ENCODE measurements at regions of chr6 and their contacts with region 1.

Region 1: DNA sequence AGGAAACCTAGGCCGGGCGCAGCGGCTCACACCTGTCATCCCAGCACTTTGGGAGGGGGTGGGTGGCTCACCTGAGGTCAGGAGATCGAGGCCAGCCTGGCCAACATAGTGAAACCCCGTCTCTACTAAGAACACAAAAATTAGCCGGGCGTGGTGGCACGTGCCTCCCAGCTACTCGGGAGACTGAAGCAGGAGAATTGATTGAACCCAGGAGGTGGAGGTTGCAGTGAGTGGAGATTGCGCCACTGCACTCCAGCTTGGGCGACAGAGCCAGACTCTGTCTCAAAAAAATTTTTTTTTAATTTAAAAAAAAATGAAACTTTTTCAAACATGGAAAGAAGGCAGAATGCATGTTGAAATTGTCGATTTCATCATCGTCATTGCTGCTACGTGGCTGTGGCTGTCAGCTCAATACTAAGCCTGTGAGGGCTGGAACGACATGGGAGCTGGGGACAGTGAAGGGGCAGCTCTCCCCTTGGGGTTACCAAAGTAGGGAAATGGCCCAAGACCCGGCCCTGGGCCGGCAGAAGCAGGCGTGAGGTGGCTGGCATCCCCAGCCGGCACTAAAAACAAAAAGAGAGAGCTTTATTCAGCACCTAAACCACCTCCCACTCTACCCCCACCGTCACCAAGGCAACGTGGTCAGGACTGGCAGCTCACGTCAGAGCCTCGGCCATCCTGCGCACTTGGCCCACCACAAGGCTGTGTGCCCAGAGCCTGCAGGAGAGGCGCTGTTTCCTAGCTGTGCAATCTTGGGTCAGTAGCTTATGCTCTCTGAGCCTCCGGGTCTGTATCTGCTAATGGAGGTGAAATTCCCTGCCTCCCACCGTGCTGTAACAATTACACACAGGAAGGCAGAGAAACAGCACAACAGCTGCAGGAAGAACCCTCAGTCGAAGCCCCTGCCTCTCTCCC is 30.8 kb downstream of the AGPAT4 start:
- DNase-seq: peak; percentile 85 to 90
- ATAC-seq: peak; percentile 75 to 87 (median 79)
- H3K4me3 ChIP-seq: no peak overlapping the region
- H3K4me3 Mint-ChIP-seq: peak overlapping the region; percentile 84
- H3K27ac ChIP-seq: peak overlapping the region; percentile 77
- H3K27ac Mint-ChIP-seq: peak overlapping the region; percentile 92 to 95
- H3K4me1 ChIP-seq: peaks cover 30% of the 10 kb centered on the region
- H3K4me1 Mint-ChIP-seq: peaks cover 39 to 41% of the 10 kb centered on the region in 2 donors
- H3K27me3 ChIP-seq: no peaks in the 10 kb centered on the region
- H3K27me3 Mint-ChIP-seq: peaks cover 2 to 26% of the 10 kb centered on the region in 2 donors
- CTCF ChIP-seq: peak; percentile 16

Region 2: DNA sequence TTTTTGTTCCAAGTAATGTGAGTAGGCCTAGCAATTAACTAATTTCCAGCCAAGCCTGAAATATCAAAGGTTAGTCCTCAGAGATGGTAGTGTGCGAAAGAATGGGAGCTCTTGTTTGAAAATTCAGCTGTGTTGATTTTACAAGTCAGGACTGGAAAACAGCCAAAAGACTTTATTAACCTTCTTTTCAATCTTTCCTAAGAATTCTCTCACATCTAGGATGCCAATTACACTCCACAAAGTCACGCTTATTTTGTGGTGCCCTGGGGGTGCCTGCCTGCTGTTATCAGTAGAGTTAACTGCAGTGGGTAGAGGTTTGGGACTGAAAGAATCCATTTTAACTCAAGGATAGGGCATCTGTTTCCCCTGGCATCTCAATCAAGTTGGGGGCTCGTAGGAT is 282.2 kb before region 1 on chr6:
- intact Hi-C with region 1: no loop called
- DNase-seq: no peak
- ATAC-seq: no peak
- H3K4me3 ChIP-seq: no peak overlapping the region
- H3K4me3 Mint-ChIP-seq: no peak overlapping the region
- H3K27ac ChIP-seq: no peak overlapping the region
- H3K27ac Mint-ChIP-seq: no peak overlapping the region
- H3K4me1 ChIP-seq: no peaks in the 10 kb centered on the region
- H3K4me1 Mint-ChIP-seq: no peaks in the 10 kb centered on the region
- H3K27me3 ChIP-seq: no peaks in the 10 kb centered on the region
- H3K27me3 Mint-ChIP-seq: peaks cover 20 to 47% of the 10 kb centered on the region in 2 donors
- CTCF ChIP-seq: no peak

Region 3: GRCh38 chr6:160992061-160992979 is 250.7 kb before region 1 on chr6:
- intact Hi-C with region 1: loop called (anchors 1 kb)
- DNase-seq: peak in 1 of 2 donors; percentile 72
- ATAC-seq: peak; percentile 50 to 74 (median 60)
- H3K4me3 ChIP-seq: peak overlapping the region; percentile 57
- H3K4me3 Mint-ChIP-seq: peak overlapping the region; percentile 99
- H3K27ac ChIP-seq: peak overlapping the region; percentile 74
- H3K27ac Mint-ChIP-seq: peak overlapping the region; percentile 88 to 94
- H3K4me1 ChIP-seq: peaks cover 7% of the 10 kb centered on the region
- H3K4me1 Mint-ChIP-seq: peaks cover 36 to 41% of the 10 kb centered on the region in 2 donors
- H3K27me3 ChIP-seq: no peaks in the 10 kb centered on the region
- H3K27me3 Mint-ChIP-seq: peaks cover 0 to 5% of the 10 kb centered on the region in 2 donors
- CTCF ChIP-seq: no peak

Region 4: GRCh38 chr6:161228921-161229591 is 14.0 kb before region 1 on chr6:
- intact Hi-C with region 1: loop called (anchors 1 kb)
- DNase-seq: no peak
- ATAC-seq: no peak
- H3K4me3 ChIP-seq: no peak overlapping the region
- H3K4me3 Mint-ChIP-seq: peak overlapping the region; percentile 49
- H3K27ac ChIP-seq: no peak overlapping the region
- H3K27ac Mint-ChIP-seq: peak overlapping the region; percentile 24 to 87
- H3K4me1 ChIP-seq: peaks cover 49% of the 10 kb centered on the region
- H3K4me1 Mint-ChIP-seq: peaks cover 49 to 61% of the 10 kb centered on the region in 2 donors
- H3K27me3 ChIP-seq: no peaks in the 10 kb centered on the region
- H3K27me3 Mint-ChIP-seq: peaks cover 5 to 6% of the 10 kb centered on the region in 2 donors
- CTCF ChIP-seq: no peak

Region 5: GRCh38 chr6:161273752-161274487 is 30.9 kb after region 1 on chr6 and contains the start of gene AGPAT4:
- intact Hi-C with region 1: loop called (anchors 1 kb)
- DNase-seq: peak; percentile 62 to 93
- ATAC-seq: peak; percentile 88 to 98 (median 94)
- H3K4me3 ChIP-seq: peak within 1 kb of the TSS; percentile 61
- H3K4me3 Mint-ChIP-seq: peak within 1 kb of the TSS; percentile 95
- H3K27ac ChIP-seq: peak within 1 kb of the TSS; percentile 89
- H3K27ac Mint-ChIP-seq: peak within 1 kb of the TSS; percentile 94 to 96
- H3K4me1 ChIP-seq: peaks cover 6% of the 10 kb centered on the region
- H3K4me1 Mint-ChIP-seq: peaks cover 29 to 36% of the 10 kb centered on the region in 2 donors
- H3K27me3 ChIP-seq: no peaks in the 10 kb centered on the region
- H3K27me3 Mint-ChIP-seq: peaks cover 3 to 7% of the 10 kb centered on the region in 2 donors
- CTCF ChIP-seq: no peak
- total RNA-seq, gene AGPAT4: 24.5 to 38.1 (median 25.8) TPM